ENCODE measurements at regions of chr3 and their contacts with region 1.

Region 1: GRCh38 chr3:119669906-119670570 is 7.2 kb downstream of the COX17 start:
- DNase-seq: no peak
- H3K4me3 ChIP-seq: no peak overlapping the region
- H3K27ac ChIP-seq: peak overlapping the region in 3 of 4 donors; percentile 21 to 54 (median 29)
- H3K4me1 ChIP-seq: peaks cover under 1 to 29% (median 10%) of the 10 kb centered on the region in 4 donors
- H3K27me3 ChIP-seq: no peaks in the 10 kb centered on the region
- CTCF ChIP-seq: no peak
- EP300 ChIP-seq: no peak
- POLR2A ChIP-seq: no peak

Region 2: GRCh38 chr3:120596116-120596852 is 926.2 kb after region 1 on chr3 and contains the start of gene NDUFB4:
- intact Hi-C with region 1: loop called (anchors 5 kb)
- DNase-seq: peak; percentile 98
- H3K4me3 ChIP-seq: peak within 1 kb of the TSS; percentile 65 to 79 (median 77)
- H3K27ac ChIP-seq: peak within 1 kb of the TSS; percentile 87 to 90 (median 88)
- H3K4me1 ChIP-seq: peaks cover 21 to 51% (median 49%) of the 10 kb centered on the region in 4 donors
- H3K27me3 ChIP-seq: no peaks in the 10 kb centered on the region
- CTCF ChIP-seq: no peak
- EP300 ChIP-seq: no peak
- POLR2A ChIP-seq: no peak
- total RNA-seq, gene NDUFB4: 142 to 333 (median 256) TPM

Measured in esophagus muscularis mucosa (tissue), 4 donors.